Naive thymus-derived CD4-positive, alpha-beta T cell (primary cell): ENCODE measurements at regions of chr3 and their contacts with region 1.

Region 1: GRCh38 chr3:100316641-100317069 is 17.9 kb upstream of the NIT2 start:
- DNase-seq: peak in 7 of 9 donors; percentile 13 to 60 (median 54)
- ATAC-seq: peak; percentile 95
- H3K4me3 ChIP-seq: no peak overlapping the region
- H3K4me3 Mint-ChIP-seq: peak overlapping the region in 6 of 10 donors; percentile 32 to 67 (median 50)
- H3K27ac ChIP-seq: no peak overlapping the region
- H3K27ac Mint-ChIP-seq: peak overlapping the region in 6 of 9 donors; percentile 57 to 87 (median 70)
- H3K4me1 ChIP-seq: no peaks in the 10 kb centered on the region
- H3K4me1 Mint-ChIP-seq: peaks cover 0 to 19% (median 14%) of the 10 kb centered on the region in 7 donors
- H3K27me3 ChIP-seq: no peaks in the 10 kb centered on the region
- H3K27me3 Mint-ChIP-seq: no peaks in the 10 kb centered on the region

Region 2: GRCh38 chr3:99789011-99789721 is 527.5 kb before region 1 on chr3:
- CTCF ChIA-PET with region 1: no interaction called
- POLR2A ChIA-PET with region 1: no interaction called
- intact Hi-C with region 1: no loop called
- DNase-seq: peak in 3 of 9 donors; percentile 1 to 10 (median 9)
- ATAC-seq: peak; percentile 76
- H3K4me3 ChIP-seq: no peak overlapping the region
- H3K4me3 Mint-ChIP-seq: no peak overlapping the region
- H3K27ac ChIP-seq: no peak overlapping the region
- H3K27ac Mint-ChIP-seq: no peak overlapping the region
- H3K4me1 ChIP-seq: no peaks in the 10 kb centered on the region
- H3K4me1 Mint-ChIP-seq: peaks cover 0 to 3% (median 0%) of the 10 kb centered on the region in 7 donors
- H3K27me3 ChIP-seq: no peaks in the 10 kb centered on the region
- H3K27me3 Mint-ChIP-seq: peaks cover 0 to 40% (median 8%) of the 10 kb centered on the region in 5 donors

Region 3: DNA sequence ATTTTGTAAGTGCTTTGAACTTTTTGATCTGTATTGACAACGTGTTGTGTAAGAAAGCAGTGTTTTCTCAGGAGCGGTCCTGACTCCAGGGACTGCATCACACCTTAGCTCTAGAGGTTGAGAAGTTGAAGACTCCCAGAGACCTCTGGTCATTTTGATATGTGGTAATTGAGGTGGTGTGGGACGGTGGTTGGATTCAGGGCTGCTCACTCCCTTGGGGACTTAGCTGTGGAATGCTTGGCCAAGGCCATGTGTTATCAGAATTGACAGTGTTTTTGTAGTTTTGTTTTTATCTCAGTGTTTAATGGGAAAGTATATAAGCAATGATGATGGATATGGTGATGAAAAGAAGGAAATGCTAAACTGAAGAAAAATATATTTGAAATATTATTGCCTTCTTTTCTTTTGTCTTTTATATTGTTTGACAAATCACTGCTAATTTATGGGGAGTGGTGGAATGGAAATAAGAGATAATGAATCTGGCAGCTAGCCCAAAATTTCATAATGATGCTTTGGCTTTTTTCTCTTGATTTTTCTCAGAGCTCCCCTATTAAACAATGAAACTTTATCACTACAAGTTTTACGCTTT is 482.9 kb before region 1 on chr3:
- CTCF ChIA-PET with region 1: interaction called, 8 read pairs
- POLR2A ChIA-PET with region 1: no interaction called
- intact Hi-C with region 1: loop called (anchors 5 kb)
- DNase-seq: no peak
- ATAC-seq: no peak
- H3K4me3 ChIP-seq: no peak overlapping the region
- H3K4me3 Mint-ChIP-seq: no peak overlapping the region
- H3K27ac ChIP-seq: no peak overlapping the region
- H3K27ac Mint-ChIP-seq: no peak overlapping the region
- H3K4me1 ChIP-seq: no peaks in the 10 kb centered on the region
- H3K4me1 Mint-ChIP-seq: peaks cover 0 to 11% (median 4%) of the 10 kb centered on the region in 7 donors
- H3K27me3 ChIP-seq: no peaks in the 10 kb centered on the region
- H3K27me3 Mint-ChIP-seq: no peaks in the 10 kb centered on the region

Region 4: DNA sequence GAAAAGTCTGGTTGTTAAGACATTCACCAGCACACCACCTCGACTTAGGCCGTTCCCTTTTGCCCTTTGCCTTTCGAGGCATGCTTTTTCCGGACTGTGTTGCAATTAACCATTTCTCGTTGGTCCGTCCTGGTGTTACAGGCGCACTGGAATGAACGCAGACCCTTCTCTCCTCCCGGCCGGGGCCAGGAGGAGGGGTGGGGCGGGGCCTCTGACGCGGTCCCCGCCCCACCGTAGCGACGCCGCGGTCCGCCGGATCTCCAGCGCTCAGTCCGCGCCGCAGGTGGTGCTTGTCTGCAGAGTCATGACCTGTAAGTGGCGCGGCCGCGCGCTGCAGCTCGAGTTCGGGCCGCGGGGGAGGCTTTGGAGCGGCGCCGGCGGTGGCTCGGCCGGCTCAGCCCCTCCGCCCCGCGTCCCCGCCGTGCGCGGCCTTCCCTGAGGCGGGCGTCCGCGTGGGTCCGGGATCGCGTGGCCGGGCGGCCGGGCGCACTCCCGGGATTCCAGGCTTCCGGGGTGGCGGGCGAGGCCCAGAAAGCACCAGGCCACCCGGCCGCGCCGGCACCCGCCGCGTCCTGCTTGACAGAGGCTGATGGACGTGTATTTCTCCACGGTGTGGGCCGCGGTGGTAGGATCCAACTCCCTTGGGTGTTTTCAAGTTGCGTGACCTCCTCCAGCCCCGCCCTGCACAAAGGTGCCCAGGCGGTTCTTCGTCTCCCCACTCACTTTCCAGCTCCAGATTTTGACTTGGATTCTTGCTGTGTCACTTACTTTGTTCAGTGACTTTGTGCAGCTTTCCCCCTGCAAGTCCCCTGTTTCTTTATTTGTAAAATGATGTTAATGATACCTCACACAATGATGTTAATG is 18.1 kb after region 1 on chr3 and contains the start of gene NIT2:
- CTCF ChIA-PET with region 1: interaction called, 3 read pairs
- POLR2A ChIA-PET with region 1: no interaction called
- intact Hi-C with region 1: loop called (anchors 1 to 2 kb)
- DNase-seq: peak; percentile 49 to 79 (median 65)
- ATAC-seq: peak; percentile 97
- H3K4me3 ChIP-seq: peak within 1 kb of the TSS; percentile 72
- H3K4me3 Mint-ChIP-seq: peak within 1 kb of the TSS; percentile 86 to 99 (median 94)
- H3K27ac ChIP-seq: peak within 1 kb of the TSS; percentile 76
- H3K27ac Mint-ChIP-seq: peak within 1 kb of the TSS; percentile 87 to 97 (median 93)
- H3K4me1 ChIP-seq: peaks cover 8 to 12% of the 10 kb centered on the region in 2 donors
- H3K4me1 Mint-ChIP-seq: peaks cover 11 to 40% (median 30%) of the 10 kb centered on the region in 7 donors
- H3K27me3 ChIP-seq: no peaks in the 10 kb centered on the region
- H3K27me3 Mint-ChIP-seq: no peaks in the 10 kb centered on the region
- total RNA-seq, gene NIT2: 25.3 to 51.6 (median 30.6) TPM

Region 5: DNA sequence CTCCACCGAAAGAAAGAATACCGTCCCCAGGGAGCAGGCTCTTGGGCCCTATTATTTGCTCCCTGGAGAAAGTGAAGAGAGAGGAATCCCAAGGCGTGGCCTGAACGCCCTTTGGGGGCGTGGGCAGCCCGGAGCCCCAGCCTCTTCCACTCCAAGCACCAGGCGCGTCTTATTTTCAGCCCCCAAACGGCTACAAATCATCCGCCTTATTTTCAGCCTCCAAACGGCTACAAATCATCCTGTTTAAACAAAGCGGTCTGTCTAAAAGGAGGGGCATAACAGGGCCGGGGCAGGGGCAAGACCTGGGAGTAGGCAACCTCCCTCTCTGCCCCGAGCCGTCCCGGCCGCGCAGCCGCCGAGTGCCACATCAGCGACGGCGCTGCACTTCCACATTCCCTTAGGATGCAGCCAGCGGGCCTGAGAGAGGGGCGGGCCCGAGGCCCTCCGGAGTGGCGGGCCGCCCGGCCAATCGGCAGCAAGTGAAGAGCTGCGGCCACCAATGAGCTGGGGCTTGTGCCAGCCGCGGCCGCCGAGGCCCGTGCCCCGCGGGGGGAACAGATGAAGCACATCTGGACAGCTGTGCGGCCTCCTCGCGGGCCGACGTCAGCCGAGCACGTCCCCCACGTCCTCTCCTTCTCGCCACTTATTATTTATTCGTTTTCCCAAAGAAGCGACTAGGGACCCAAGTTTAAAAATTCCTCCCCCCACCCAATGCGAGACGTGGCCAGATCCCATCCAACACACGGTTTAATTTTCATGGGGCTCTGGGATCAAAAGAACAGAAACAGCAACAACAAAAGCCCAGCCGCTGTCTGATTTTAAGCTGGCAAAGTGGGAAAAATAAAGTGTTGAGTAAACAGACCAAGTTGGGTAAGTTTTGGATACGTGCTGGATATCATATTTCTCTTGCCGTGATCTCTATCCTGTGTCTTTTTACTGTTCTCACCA is 175.7 kb after region 1 on chr3 and contains the start of gene TMEM45A:
- CTCF ChIA-PET with region 1: no interaction called
- POLR2A ChIA-PET with region 1: no interaction called
- intact Hi-C with region 1: loop called (anchors 1 to 10 kb)
- DNase-seq: peak; percentile 20 to 85 (median 69)
- ATAC-seq: peak; percentile 97
- H3K4me3 ChIP-seq: peak within 1 kb of the TSS; percentile 64
- H3K4me3 Mint-ChIP-seq: peak within 1 kb of the TSS; percentile 76 to 91 (median 85)
- H3K27ac ChIP-seq: no peak within 1 kb of the TSS
- H3K27ac Mint-ChIP-seq: peak within 1 kb of the TSS in 3 of 9 donors; percentile 22 to 51 (median 49)
- H3K4me1 ChIP-seq: peaks cover 6% of the 10 kb centered on the region in 2 donors
- H3K4me1 Mint-ChIP-seq: peaks cover 5 to 14% (median 9%) of the 10 kb centered on the region in 7 donors
- H3K27me3 ChIP-seq: no peaks in the 10 kb centered on the region
- H3K27me3 Mint-ChIP-seq: peaks cover 6 to 42% (median 17%) of the 10 kb centered on the region in 5 donors
- total RNA-seq, gene TMEM45A: 0.11 to 0.44 (median 0.21) TPM

Region 6: GRCh38 chr3:100796556-100796955 is 479.9 kb after region 1 on chr3:
- CTCF ChIA-PET with region 1: no interaction called
- POLR2A ChIA-PET with region 1: no interaction called
- intact Hi-C with region 1: loop called (anchors 1 kb)
- DNase-seq: peak in 1 of 9 donors; percentile 1
- ATAC-seq: no peak
- H3K4me3 ChIP-seq: no peak overlapping the region
- H3K4me3 Mint-ChIP-seq: peak overlapping the region in 6 of 10 donors; percentile 22 to 68 (median 48)
- H3K27ac ChIP-seq: no peak overlapping the region
- H3K27ac Mint-ChIP-seq: peak overlapping the region in 2 of 9 donors; percentile 43 to 51
- H3K4me1 ChIP-seq: no peaks in the 10 kb centered on the region
- H3K4me1 Mint-ChIP-seq: peaks cover 0 to 7% (median 5%) of the 10 kb centered on the region in 7 donors
- H3K27me3 ChIP-seq: no peaks in the 10 kb centered on the region
- H3K27me3 Mint-ChIP-seq: peaks cover 0 to 22% (median 0%) of the 10 kb centered on the region in 5 donors